Activated B cell treated with CpG ODN at 0.5 μM for 24 hours (primary cell): ENCODE measurements at regions of chr5 and their contacts with region 1.

Region 1: GRCh38 chr5:141960449-141961202 is 2.6 kb upstream of the PCDH12 start:
- DNase-seq: peak; percentile 77
- ATAC-seq: peak; percentile 99
- H3K4me3 Mint-ChIP-seq: peak overlapping the region; percentile 9
- H3K27ac Mint-ChIP-seq: peak overlapping the region; percentile 75
- H3K4me1 Mint-ChIP-seq: peaks cover 18% of the 10 kb centered on the region
- H3K27me3 Mint-ChIP-seq: peaks cover 3% of the 10 kb centered on the region
- CTCF ChIP-seq: no peak

Region 2: GRCh38 chr5:141691867-141692532 is 268.6 kb before region 1 on chr5:
- CTCF ChIA-PET with region 1: interaction called, 133 read pairs
- POLR2A ChIA-PET with region 1: interaction called, 6 read pairs
- intact Hi-C with region 1: loop called (anchors 1 kb)
- DNase-seq: peak; percentile 83
- ATAC-seq: peak; percentile 98
- H3K4me3 Mint-ChIP-seq: peak overlapping the region; percentile 47
- H3K27ac Mint-ChIP-seq: no peak overlapping the region
- H3K4me1 Mint-ChIP-seq: peaks cover 11% of the 10 kb centered on the region
- H3K27me3 Mint-ChIP-seq: peaks cover 52% of the 10 kb centered on the region
- CTCF ChIP-seq: peak; percentile 81

Region 3: DNA sequence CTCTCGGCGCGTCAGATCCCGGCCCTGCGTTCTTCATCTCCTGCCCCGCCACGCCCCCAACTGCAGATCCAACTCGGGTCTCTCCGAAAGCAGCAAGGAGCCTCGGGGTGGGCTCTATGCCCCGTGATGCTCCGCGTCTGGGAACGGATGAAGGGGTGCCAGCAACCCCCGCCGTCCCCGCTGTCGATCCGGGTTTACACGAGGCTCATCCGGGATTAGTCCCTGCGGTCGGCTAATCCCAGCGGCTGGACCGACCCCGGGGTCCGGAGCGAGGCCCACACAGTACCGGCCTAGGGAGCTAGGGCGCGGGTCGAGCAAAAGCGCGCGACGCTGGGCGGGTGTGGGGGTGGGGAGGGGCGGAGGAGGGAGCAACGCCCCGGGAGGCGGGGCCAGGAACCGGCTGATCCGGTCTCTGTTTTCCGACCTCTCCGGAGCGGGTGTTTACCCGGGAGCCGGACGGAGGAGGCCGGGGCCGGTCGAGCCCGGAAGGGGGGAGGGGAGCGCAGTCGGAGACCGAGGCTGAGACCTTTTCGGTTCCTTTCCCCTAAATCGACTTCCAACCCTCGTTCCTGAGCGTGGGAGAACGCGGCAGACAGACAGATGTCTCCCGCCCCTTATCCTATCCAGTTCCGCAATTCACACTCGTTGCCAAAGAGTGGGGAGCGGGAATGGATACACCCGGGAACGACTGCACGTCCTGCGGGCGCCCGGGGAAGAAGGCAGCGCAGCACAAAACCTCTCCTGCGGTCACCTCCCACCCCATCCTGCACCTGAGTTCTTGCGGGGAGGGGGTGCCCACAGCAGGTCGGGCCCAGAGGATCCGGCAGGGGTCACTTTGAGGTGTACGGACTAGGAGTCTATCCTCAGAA is 111.0 kb before region 1 on chr5:
- CTCF ChIA-PET with region 1: interaction called, 9 read pairs
- POLR2A ChIA-PET with region 1: no interaction called
- intact Hi-C with region 1: loop called (anchors 2 kb)
- DNase-seq: peak; percentile 66
- ATAC-seq: peak; percentile 84
- H3K4me3 Mint-ChIP-seq: peak overlapping the region; percentile 87
- H3K27ac Mint-ChIP-seq: peak overlapping the region; percentile 53
- H3K4me1 Mint-ChIP-seq: peaks cover 9% of the 10 kb centered on the region
- H3K27me3 Mint-ChIP-seq: peaks cover 11% of the 10 kb centered on the region
- CTCF ChIP-seq: no peak

Region 4: DNA sequence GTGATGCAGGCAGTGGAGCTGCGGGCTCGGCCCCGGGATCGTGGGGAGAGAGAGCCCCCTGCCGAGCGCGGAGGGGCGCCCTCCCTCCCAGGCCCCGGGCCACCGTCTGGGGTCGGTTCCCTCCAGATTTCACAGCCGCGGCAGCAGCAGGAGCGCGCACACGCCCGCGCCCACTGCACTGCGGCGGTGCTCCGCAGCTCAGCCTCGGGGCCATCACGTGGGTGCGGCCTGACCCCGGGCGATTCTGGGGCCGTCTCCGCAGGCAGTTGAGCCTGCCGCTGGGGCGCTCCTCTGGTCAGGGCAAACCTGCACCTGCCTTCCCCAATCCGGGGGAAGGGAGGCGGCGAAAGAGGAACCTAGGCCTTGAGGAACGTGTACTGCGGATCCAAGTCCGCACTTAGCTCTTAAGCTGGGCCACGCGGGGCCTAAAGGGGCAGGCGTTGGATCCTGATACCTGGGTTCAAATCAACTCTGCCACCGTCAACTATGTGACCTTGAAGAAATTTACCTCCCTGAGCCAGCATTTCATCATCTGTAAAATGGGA is 46.4 kb before region 1 on chr5:
- CTCF ChIA-PET with region 1: interaction called, 14 read pairs
- POLR2A ChIA-PET with region 1: no interaction called
- intact Hi-C with region 1: no loop called
- DNase-seq: peak; percentile 47
- ATAC-seq: peak; percentile 78
- H3K4me3 Mint-ChIP-seq: peak overlapping the region; percentile 72
- H3K27ac Mint-ChIP-seq: no peak overlapping the region
- H3K4me1 Mint-ChIP-seq: peaks cover 40% of the 10 kb centered on the region
- H3K27me3 Mint-ChIP-seq: peaks cover 8% of the 10 kb centered on the region
- CTCF ChIP-seq: no peak

Region 5: DNA sequence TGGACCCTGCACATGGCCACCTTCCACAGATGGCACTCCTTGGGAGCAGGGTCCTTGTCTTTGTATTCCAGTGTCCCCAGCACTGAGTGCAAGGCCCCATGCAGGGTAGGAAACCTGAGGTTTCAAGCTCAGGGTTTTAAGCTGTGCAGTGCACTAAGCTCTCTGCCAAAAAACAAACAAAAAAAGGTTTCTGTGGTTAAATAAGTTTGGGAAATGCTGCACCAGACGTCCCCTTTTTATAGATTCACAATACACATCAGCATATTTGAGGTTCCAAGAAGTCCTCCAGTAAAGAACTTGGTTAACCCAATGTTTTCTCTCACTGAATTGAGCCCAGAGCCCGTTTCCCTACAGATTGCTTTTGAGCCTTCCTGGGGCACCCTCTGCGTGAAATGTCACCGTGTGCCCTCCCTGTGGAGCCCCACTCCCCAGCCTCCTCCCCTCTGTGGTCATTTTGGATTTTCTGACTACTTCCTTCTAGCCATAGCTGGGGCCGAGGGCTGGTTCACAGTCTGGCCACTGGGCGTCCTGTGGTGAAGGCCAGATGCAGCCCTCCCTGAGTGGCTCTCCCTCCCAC is 19.8 kb before region 1 on chr5:
- CTCF ChIA-PET with region 1: interaction called, 16 read pairs
- POLR2A ChIA-PET with region 1: interaction called, 3 read pairs
- intact Hi-C with region 1: no loop called
- DNase-seq: no peak
- ATAC-seq: no peak
- H3K4me3 Mint-ChIP-seq: no peak overlapping the region
- H3K27ac Mint-ChIP-seq: peak overlapping the region; percentile 27
- H3K4me1 Mint-ChIP-seq: no peaks in the 10 kb centered on the region
- H3K27me3 Mint-ChIP-seq: no peaks in the 10 kb centered on the region
- CTCF ChIP-seq: no peak